ENCODE measurements at regions of chr11 and their contacts with region 1.

Region 1: GRCh38 chr11:65418711-65419459 is 3.7 kb upstream of the NEAT1 start:
- DNase-seq: peak; percentile 98 to 99 (median 99)
- H3K4me3 ChIP-seq: peak overlapping the region in 6 of 7 experiments; percentile 25 to 100 (median 82)
- H3K27ac ChIP-seq: peak overlapping the region; percentile 99 to 100
- H3K4me1 ChIP-seq: peaks cover 9 to 71% (median 65%) of the 10 kb centered on the region in 4 experiments
- H3K27me3 ChIP-seq: no peaks in the 10 kb centered on the region

Region 2: DNA sequence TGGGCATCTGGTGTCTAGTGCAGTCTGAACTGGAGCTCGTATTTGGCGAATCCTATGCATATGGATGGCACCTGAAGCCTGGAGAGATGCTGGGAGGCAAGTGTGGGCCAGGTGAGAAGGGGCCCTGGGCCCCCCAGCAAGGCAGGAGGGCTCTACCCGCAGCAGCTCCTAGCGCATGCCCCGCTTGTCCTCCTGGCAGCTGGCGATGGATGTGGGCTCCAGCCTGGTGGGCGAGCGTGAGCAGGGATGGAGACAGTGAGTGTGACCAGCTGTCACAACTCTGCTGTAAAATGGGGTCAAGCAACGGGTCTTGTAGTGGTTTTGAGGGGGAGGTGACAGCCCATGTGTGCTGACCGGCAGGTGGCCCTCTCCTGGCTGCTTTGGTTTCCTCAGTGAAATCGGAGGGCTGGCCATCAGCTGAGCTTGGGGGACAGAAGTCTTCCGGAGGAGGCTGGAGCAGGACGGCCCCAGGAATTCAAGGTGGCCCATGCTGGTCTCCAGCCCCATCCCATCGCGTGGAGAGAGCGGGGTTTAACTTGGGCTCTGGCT is 20.4 kb before region 1 on chr11:
- CTCF ChIA-PET with region 1: interaction called, 77 read pairs
- POLR2A ChIA-PET with region 1: interaction called, 55 read pairs
- DNase-seq: no peak
- H3K4me3 ChIP-seq: no peak overlapping the region
- H3K27ac ChIP-seq: no peak overlapping the region
- H3K4me1 ChIP-seq: peaks cover 2 to 18% (median 16%) of the 10 kb centered on the region in 4 experiments
- H3K27me3 ChIP-seq: no peaks in the 10 kb centered on the region

Region 3: DNA sequence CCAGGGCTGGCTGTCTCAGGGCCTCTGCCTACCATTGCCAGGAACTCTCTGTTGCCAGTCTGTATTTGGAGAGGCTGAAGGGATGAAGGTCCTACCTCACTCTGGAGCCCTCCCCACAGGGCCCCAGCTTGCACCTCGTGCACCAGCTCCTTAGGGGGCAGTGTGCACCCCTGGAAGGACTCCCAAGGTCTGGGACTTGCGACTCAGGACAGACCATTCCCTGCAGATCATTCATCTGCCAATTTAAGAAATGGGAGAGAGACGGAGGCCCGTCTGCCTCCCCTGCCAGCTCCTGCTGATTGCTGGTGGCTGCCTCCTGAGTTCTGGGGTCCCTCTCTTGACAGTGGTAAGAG is 52.5 kb after region 1 on chr11:
- CTCF ChIA-PET with region 1: interaction called, 15 read pairs
- POLR2A ChIA-PET with region 1: interaction called, 92 read pairs
- DNase-seq: peak; percentile 70 to 75 (median 72)
- H3K4me3 ChIP-seq: peak overlapping the region in 5 of 7 experiments; percentile 1 to 64 (median 35)
- H3K27ac ChIP-seq: peak overlapping the region; percentile 93 to 96
- H3K4me1 ChIP-seq: peaks cover 10 to 43% (median 35%) of the 10 kb centered on the region in 4 experiments
- H3K27me3 ChIP-seq: no peaks in the 10 kb centered on the region

Region 4: DNA sequence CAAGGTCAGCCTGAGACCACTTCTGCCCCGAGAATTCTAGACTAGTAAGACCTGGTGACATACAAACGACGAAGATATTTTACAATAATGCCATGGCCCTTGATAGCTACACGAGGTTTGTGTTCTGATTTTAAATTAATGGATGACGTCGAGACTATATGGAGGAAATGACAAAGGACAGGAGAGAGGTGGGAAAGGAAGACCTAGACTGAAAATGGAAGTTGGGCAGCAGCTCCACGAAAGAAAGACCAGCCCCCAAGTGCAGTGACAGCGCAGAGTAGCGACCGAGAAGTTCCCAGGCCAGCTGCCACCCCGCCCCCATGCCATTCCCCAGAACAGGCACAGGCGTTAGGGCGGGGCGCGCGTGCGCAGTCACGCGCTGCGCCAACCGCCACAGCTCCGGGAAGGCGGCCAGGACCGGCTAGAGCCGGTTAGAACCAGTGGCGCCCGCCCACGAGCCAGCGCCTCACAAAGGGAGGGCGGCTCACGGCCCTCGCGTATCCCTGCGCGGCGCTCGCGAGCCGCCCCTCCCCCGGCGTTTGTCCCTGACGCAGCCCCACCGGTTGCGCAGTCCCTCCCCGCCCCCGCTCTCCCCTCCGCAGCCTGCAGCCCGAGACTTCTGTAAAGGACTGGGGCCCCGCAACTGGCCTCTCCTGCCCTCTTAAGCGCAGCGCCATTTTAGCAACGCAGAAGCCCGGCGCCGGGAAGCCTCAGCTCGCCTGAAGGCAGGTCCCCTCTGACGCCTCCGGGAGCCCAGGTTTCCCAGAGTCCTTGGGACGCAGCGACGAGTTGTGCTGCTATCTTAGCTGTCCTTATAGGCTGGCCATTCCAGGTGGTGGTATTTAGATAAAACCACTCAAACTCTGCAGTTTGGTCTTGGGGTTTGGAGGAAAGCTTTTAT is 78.5 kb after region 1 on chr11:
- CTCF ChIA-PET with region 1: interaction called, 74 read pairs
- POLR2A ChIA-PET with region 1: interaction called, 747 read pairs
- DNase-seq: peak; percentile 98 to 99 (median 99)
- H3K4me3 ChIP-seq: peak overlapping the region; percentile 72 to 100 (median 98)
- H3K27ac ChIP-seq: peak overlapping the region; percentile 100
- H3K4me1 ChIP-seq: peaks cover 22 to 57% (median 54%) of the 10 kb centered on the region in 4 experiments
- H3K27me3 ChIP-seq: no peaks in the 10 kb centered on the region

Measured in common myeloid progenitor, CD34-positive (primary cell).